ENCODE measurements at regions of chr10 and their contacts with region 1.

Region 1: DNA sequence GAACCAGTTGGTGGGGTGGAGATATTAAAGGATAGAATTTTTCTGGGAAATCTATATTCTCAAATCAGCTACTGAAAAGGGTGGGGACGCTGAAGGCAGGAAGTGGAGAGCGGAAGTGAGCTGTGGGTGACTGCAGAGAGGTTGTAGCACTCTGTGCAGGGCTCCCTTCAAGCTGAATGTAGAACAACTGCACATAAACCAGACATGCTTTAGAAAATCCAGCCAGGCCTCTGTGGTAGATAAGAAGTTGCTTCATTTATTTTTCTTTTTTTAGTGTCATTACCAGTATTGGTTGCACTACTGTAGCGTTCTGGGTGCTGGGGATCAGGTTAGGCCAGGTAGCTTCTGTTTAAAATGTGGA is 127.8 kb downstream of the CELF2 start:
- DNase-seq: peak; percentile 31 to 85 (median 81)
- ATAC-seq: peak; percentile 75
- H3K4me3 ChIP-seq: peak overlapping the region; percentile 48
- H3K4me3 Mint-ChIP-seq: peak overlapping the region; percentile 73 to 91 (median 80)
- H3K27ac ChIP-seq: peak overlapping the region; percentile 94
- H3K27ac Mint-ChIP-seq: peak overlapping the region; percentile 97 to 99 (median 99)
- H3K4me1 ChIP-seq: peaks cover 79 to 95% of the 10 kb centered on the region in 2 donors
- H3K4me1 Mint-ChIP-seq: peaks cover 73 to 100% (median 93%) of the 10 kb centered on the region in 7 donors
- H3K27me3 ChIP-seq: no peaks in the 10 kb centered on the region
- H3K27me3 Mint-ChIP-seq: no peaks in the 10 kb centered on the region

Region 2: DNA sequence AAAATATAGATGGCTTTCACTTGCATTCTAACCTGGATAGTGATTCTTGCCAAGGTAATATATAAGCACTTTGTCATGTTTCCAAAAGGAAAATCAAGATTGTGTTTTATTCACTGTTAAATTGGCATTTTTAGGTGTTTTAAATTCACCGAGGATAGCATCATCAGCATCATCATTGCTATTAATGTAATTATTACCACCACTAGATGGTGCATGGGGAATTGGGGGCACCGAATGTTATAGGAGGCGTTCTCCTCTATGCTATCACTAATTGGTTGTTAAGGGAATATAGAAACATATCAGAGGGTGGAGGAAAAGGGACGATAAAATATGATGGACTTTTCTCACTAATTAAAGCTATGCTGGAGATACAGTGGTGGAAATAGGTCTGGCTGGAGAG is 32.3 kb before region 1 on chr10:
- CTCF ChIA-PET with region 1: interaction called, 29 read pairs
- POLR2A ChIA-PET with region 1: interaction called, 24 read pairs
- intact Hi-C with region 1: loop called (anchors 1 to 2 kb)
- DNase-seq: peak in 7 of 9 donors; percentile 48 to 69 (median 65)
- ATAC-seq: peak; percentile 97
- H3K4me3 ChIP-seq: no peak overlapping the region
- H3K4me3 Mint-ChIP-seq: peak overlapping the region in 9 of 10 donors; percentile 12 to 85 (median 63)
- H3K27ac ChIP-seq: peak overlapping the region; percentile 9
- H3K27ac Mint-ChIP-seq: peak overlapping the region in 8 of 9 donors; percentile 0 to 92 (median 72)
- H3K4me1 ChIP-seq: peaks cover 0 to 9% of the 10 kb centered on the region in 2 donors
- H3K4me1 Mint-ChIP-seq: peaks cover 10 to 56% (median 38%) of the 10 kb centered on the region in 7 donors
- H3K27me3 ChIP-seq: no peaks in the 10 kb centered on the region
- H3K27me3 Mint-ChIP-seq: peaks cover 0 to 5% (median 0%) of the 10 kb centered on the region in 5 donors

Region 3: DNA sequence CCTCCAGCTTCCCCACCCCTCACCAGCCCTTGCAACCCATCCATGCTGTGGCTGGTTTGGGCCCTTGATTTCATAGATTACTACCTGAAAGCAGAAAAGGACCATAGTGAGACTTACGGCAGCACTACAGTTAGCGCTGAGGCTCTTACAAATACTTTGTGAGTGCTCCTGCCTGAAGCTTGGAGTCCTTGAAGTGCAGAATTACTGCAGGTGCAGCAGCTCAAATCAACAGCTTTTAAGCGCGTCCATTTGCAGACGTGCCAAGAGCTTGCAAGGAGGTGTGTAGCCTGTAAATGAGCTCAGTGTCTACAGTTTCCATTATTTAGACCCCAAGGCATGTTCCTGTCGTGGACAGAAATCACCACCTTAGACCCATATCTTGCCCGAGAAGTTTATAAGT is 24.8 kb before region 1 on chr10:
- CTCF ChIA-PET with region 1: interaction called, 3 read pairs
- POLR2A ChIA-PET with region 1: interaction called, 18 read pairs
- intact Hi-C with region 1: no loop called
- DNase-seq: peak in 1 of 9 donors; percentile 20
- ATAC-seq: no peak
- H3K4me3 ChIP-seq: no peak overlapping the region
- H3K4me3 Mint-ChIP-seq: peak overlapping the region in 9 of 10 donors; percentile 23 to 79 (median 64)
- H3K27ac ChIP-seq: peak overlapping the region; percentile 4
- H3K27ac Mint-ChIP-seq: peak overlapping the region in 8 of 9 donors; percentile 4 to 86 (median 76)
- H3K4me1 ChIP-seq: peaks cover 0 to 3% of the 10 kb centered on the region in 2 donors
- H3K4me1 Mint-ChIP-seq: peaks cover 3 to 66% (median 42%) of the 10 kb centered on the region in 7 donors
- H3K27me3 ChIP-seq: no peaks in the 10 kb centered on the region
- H3K27me3 Mint-ChIP-seq: peaks cover 0 to 2% (median 0%) of the 10 kb centered on the region in 5 donors

Region 4: GRCh38 chr10:11131112-11131639 is 14.3 kb before region 1 on chr10:
- CTCF ChIA-PET with region 1: interaction called, 8 read pairs
- POLR2A ChIA-PET with region 1: interaction called, 11 read pairs
- intact Hi-C with region 1: loop called in 1 of 2 experiments (anchors 1 kb)
- DNase-seq: no peak
- ATAC-seq: no peak
- H3K4me3 ChIP-seq: no peak overlapping the region
- H3K4me3 Mint-ChIP-seq: no peak overlapping the region
- H3K27ac ChIP-seq: no peak overlapping the region
- H3K27ac Mint-ChIP-seq: peak overlapping the region in 1 of 9 donors; percentile 45
- H3K4me1 ChIP-seq: no peaks in the 10 kb centered on the region
- H3K4me1 Mint-ChIP-seq: peaks cover 0 to 57% (median 36%) of the 10 kb centered on the region in 7 donors
- H3K27me3 ChIP-seq: no peaks in the 10 kb centered on the region
- H3K27me3 Mint-ChIP-seq: peaks cover 0 to 25% (median 0%) of the 10 kb centered on the region in 5 donors

Region 5: DNA sequence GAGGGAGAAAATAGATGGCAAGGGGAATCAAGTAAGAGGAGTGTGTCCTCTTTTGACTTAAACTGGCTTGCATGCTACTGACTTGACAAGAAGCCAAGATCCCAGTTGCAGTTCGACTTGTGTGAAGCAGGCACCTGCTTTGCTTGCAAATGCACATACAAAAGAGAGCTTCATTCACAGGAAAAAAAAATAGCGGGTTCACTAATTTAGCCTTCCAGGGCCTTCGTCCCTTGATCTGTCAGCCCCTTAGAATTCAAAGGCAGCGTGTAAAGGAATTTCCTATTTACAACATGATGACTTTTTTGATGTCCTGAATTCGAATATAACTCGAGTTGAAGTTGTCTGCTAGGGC is 64.3 kb after region 1 on chr10:
- CTCF ChIA-PET with region 1: no interaction called
- POLR2A ChIA-PET with region 1: no interaction called
- intact Hi-C with region 1: loop called in 1 of 2 experiments (anchors 2 kb)
- DNase-seq: peak in 4 of 9 donors; percentile 26 to 44 (median 31)
- ATAC-seq: no peak
- H3K4me3 ChIP-seq: peak overlapping the region; percentile 39
- H3K4me3 Mint-ChIP-seq: peak overlapping the region; percentile 73 to 89 (median 82)
- H3K27ac ChIP-seq: peak overlapping the region; percentile 70
- H3K27ac Mint-ChIP-seq: peak overlapping the region; percentile 81 to 94 (median 87)
- H3K4me1 ChIP-seq: peaks cover 75 to 93% of the 10 kb centered on the region in 2 donors
- H3K4me1 Mint-ChIP-seq: peaks cover 76 to 100% (median 98%) of the 10 kb centered on the region in 7 donors
- H3K27me3 ChIP-seq: no peaks in the 10 kb centered on the region
- H3K27me3 Mint-ChIP-seq: no peaks in the 10 kb centered on the region

Region 6: GRCh38 chr10:11403116-11403515 is 257.6 kb after region 1 on chr10:
- CTCF ChIA-PET with region 1: no interaction called
- POLR2A ChIA-PET with region 1: no interaction called
- intact Hi-C with region 1: loop called in 1 of 2 experiments (anchors 10 kb)
- DNase-seq: peak; percentile 25 to 90 (median 84)
- ATAC-seq: peak; percentile 95
- H3K4me3 ChIP-seq: peak overlapping the region; percentile 45
- H3K4me3 Mint-ChIP-seq: peak overlapping the region; percentile 74 to 87 (median 80)
- H3K27ac ChIP-seq: peak overlapping the region; percentile 57
- H3K27ac Mint-ChIP-seq: peak overlapping the region; percentile 89 to 98 (median 93)
- H3K4me1 ChIP-seq: peaks cover 45 to 48% of the 10 kb centered on the region in 2 donors
- H3K4me1 Mint-ChIP-seq: peaks cover 46 to 89% (median 81%) of the 10 kb centered on the region in 7 donors
- H3K27me3 ChIP-seq: no peaks in the 10 kb centered on the region
- H3K27me3 Mint-ChIP-seq: no peaks in the 10 kb centered on the region

Measured in naive thymus-derived CD4-positive, alpha-beta T cell (primary cell).